Ovary (tissue), 10 donors: ENCODE measurements at regions of chr2 and their contacts with region 1.

Region 1: DNA sequence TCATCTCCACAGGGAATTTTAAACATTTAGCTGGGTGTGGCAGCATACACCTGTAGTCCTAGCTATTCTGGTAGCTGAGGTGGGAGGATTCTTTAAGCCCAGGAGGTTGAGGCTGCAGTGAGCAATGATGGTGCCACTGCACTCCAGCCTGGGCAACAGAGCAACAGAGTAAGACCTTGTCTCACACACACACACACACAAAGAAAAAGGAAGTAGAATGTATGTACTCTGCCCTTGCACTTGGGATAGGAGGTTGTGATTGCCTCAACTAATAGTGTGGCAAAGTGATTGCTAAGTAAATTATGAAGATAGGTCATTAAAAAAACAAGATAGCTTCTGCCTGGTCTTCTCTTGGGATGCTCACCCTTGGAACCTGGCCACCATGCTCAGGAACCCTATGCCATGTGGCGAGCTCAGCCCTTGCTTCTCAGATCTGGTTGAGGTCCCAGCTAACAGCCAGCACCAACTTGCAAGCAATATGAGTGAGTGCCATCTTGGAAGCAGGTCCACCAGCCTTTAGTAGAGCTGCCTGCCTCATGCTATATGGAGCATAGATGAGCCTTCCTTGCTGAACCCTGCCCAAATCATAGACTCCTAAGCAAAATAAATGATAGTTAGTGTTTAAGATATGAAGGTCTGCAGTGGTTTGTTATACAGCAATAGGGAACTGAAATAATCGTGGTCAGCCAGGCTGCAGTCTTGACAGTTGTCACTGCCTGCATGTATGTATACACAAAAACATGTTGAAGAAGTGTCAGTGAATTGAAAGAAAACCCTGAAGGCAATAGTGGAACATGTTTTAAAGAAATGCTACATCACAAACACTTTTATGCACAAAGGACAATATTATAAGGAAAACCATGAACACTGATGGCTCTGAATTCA is 30.1 kb upstream of the PNO1 start:
- DNase-seq: no peak
- H3K4me3 ChIP-seq: no peak overlapping the region
- H3K27ac ChIP-seq: no peak overlapping the region
- H3K4me1 ChIP-seq: peaks cover 1% of the 10 kb centered on the region
- H3K27me3 ChIP-seq: no peaks in the 10 kb centered on the region
- CTCF ChIP-seq: no peak
- EP300 ChIP-seq: no peak
- POLR2A ChIP-seq: no peak

Region 2: GRCh38 chr2:67871686-67872412 is 255.8 kb before region 1 on chr2:
- intact Hi-C with region 1: no loop called
- DNase-seq: no peak
- H3K4me3 ChIP-seq: no peak overlapping the region
- H3K27ac ChIP-seq: no peak overlapping the region
- H3K4me1 ChIP-seq: no peaks in the 10 kb centered on the region
- H3K27me3 ChIP-seq: no peaks in the 10 kb centered on the region
- CTCF ChIP-seq: no peak
- EP300 ChIP-seq: no peak
- POLR2A ChIP-seq: no peak

Region 3: GRCh38 chr2:68266655-68267054 is 139.1 kb after region 1 on chr2:
- intact Hi-C with region 1: loop called in 1 of 4 experiments (anchors 5 kb)
- DNase-seq: no peak
- H3K4me3 ChIP-seq: no peak overlapping the region
- H3K27ac ChIP-seq: no peak overlapping the region
- H3K4me1 ChIP-seq: no peaks in the 10 kb centered on the region
- H3K27me3 ChIP-seq: no peaks in the 10 kb centered on the region
- CTCF ChIP-seq: no peak
- EP300 ChIP-seq: no peak
- POLR2A ChIP-seq: no peak